ENCODE measurements at regions of chr11 and their contacts with region 1.

Region 1: GRCh38 chr11:96342961-96343711 is at the start of gene MAML2:
- DNase-seq: peak; percentile 84 to 96 (median 89)
- H3K4me3 ChIP-seq: peak within 1 kb of the TSS; percentile 60 to 78
- H3K4me3 Mint-ChIP-seq: peak within 1 kb of the TSS; percentile 91 to 98 (median 94)
- H3K27ac ChIP-seq: peak within 1 kb of the TSS; percentile 75
- H3K27ac Mint-ChIP-seq: peak within 1 kb of the TSS; percentile 86 to 97 (median 96)
- H3K4me1 ChIP-seq: peaks cover 34% of the 10 kb centered on the region
- H3K4me1 Mint-ChIP-seq: peaks cover 23 to 46% (median 30%) of the 10 kb centered on the region in 4 donors
- H3K27me3 ChIP-seq: no peaks in the 10 kb centered on the region
- H3K27me3 Mint-ChIP-seq: no peaks in the 10 kb centered on the region
- total RNA-seq, gene MAML2: 37.5 to 38.3 TPM

Region 2: GRCh38 chr11:95835768-95836488 is 507.2 kb before region 1 on chr11:
- CTCF ChIA-PET with region 1: interaction called, 47 read pairs
- POLR2A ChIA-PET with region 1: interaction called, 3 read pairs
- intact Hi-C with region 1: loop called (anchors 1 kb)
- DNase-seq: peak; percentile 55 to 64 (median 55)
- H3K4me3 ChIP-seq: no peak overlapping the region
- H3K4me3 Mint-ChIP-seq: no peak overlapping the region
- H3K27ac ChIP-seq: no peak overlapping the region
- H3K27ac Mint-ChIP-seq: peak overlapping the region in 4 of 7 donors; percentile 1 to 75 (median 51)
- H3K4me1 ChIP-seq: no peaks in the 10 kb centered on the region
- H3K4me1 Mint-ChIP-seq: peaks cover 0 to 3% (median 1%) of the 10 kb centered on the region in 4 donors
- H3K27me3 ChIP-seq: no peaks in the 10 kb centered on the region
- H3K27me3 Mint-ChIP-seq: no peaks in the 10 kb centered on the region

Region 3: GRCh38 chr11:96062134-96062533 is 281.0 kb before region 1 on chr11:
- CTCF ChIA-PET with region 1: interaction called, 258 read pairs
- POLR2A ChIA-PET with region 1: interaction called, 66 read pairs
- intact Hi-C with region 1: no loop called
- DNase-seq: peak; percentile 7 to 50 (median 23)
- H3K4me3 ChIP-seq: no peak overlapping the region
- H3K4me3 Mint-ChIP-seq: no peak overlapping the region
- H3K27ac ChIP-seq: no peak overlapping the region
- H3K27ac Mint-ChIP-seq: peak overlapping the region in 6 of 7 donors; percentile 25 to 75 (median 56)
- H3K4me1 ChIP-seq: peaks cover 22% of the 10 kb centered on the region
- H3K4me1 Mint-ChIP-seq: peaks cover 35 to 54% (median 41%) of the 10 kb centered on the region in 4 donors
- H3K27me3 ChIP-seq: no peaks in the 10 kb centered on the region
- H3K27me3 Mint-ChIP-seq: no peaks in the 10 kb centered on the region

Region 4: GRCh38 chr11:96134602-96135001 is 208.5 kb before region 1 on chr11:
- CTCF ChIA-PET with region 1: interaction called, 38 read pairs
- POLR2A ChIA-PET with region 1: interaction called, 6 read pairs
- intact Hi-C with region 1: no loop called
- DNase-seq: peak in 4 of 5 donors; percentile 30 to 56 (median 38)
- H3K4me3 ChIP-seq: no peak overlapping the region
- H3K4me3 Mint-ChIP-seq: peak overlapping the region in 5 of 8 donors; percentile 21 to 83 (median 47)
- H3K27ac ChIP-seq: no peak overlapping the region
- H3K27ac Mint-ChIP-seq: peak overlapping the region in 6 of 7 donors; percentile 50 to 82 (median 72)
- H3K4me1 ChIP-seq: peaks cover 55% of the 10 kb centered on the region
- H3K4me1 Mint-ChIP-seq: peaks cover 39 to 69% (median 55%) of the 10 kb centered on the region in 4 donors
- H3K27me3 ChIP-seq: no peaks in the 10 kb centered on the region
- H3K27me3 Mint-ChIP-seq: no peaks in the 10 kb centered on the region

Region 5: GRCh38 chr11:96222102-96222501 is 121.0 kb before region 1 on chr11:
- CTCF ChIA-PET with region 1: interaction called, 26 read pairs
- POLR2A ChIA-PET with region 1: interaction called, 27 read pairs
- intact Hi-C with region 1: no loop called
- DNase-seq: no peak
- H3K4me3 ChIP-seq: no peak overlapping the region
- H3K4me3 Mint-ChIP-seq: peak overlapping the region in 7 of 8 donors; percentile 6 to 77 (median 53)
- H3K27ac ChIP-seq: peak overlapping the region; percentile 2
- H3K27ac Mint-ChIP-seq: peak overlapping the region; percentile 57 to 89 (median 80)
- H3K4me1 ChIP-seq: peaks cover 76% of the 10 kb centered on the region
- H3K4me1 Mint-ChIP-seq: peaks cover 55 to 89% (median 73%) of the 10 kb centered on the region in 4 donors
- H3K27me3 ChIP-seq: no peaks in the 10 kb centered on the region
- H3K27me3 Mint-ChIP-seq: no peaks in the 10 kb centered on the region

Region 6: GRCh38 chr11:96279018-96279895 is 63.9 kb before region 1 on chr11:
- CTCF ChIA-PET with region 1: interaction called, 13 read pairs
- POLR2A ChIA-PET with region 1: interaction called, 5 read pairs
- intact Hi-C with region 1: no loop called
- DNase-seq: no peak
- H3K4me3 ChIP-seq: no peak overlapping the region
- H3K4me3 Mint-ChIP-seq: peak overlapping the region in 3 of 8 donors; percentile 17 to 29 (median 23)
- H3K27ac ChIP-seq: no peak overlapping the region
- H3K27ac Mint-ChIP-seq: peak overlapping the region; percentile 4 to 71 (median 41)
- H3K4me1 ChIP-seq: peaks cover 57% of the 10 kb centered on the region
- H3K4me1 Mint-ChIP-seq: peaks cover 38 to 65% (median 57%) of the 10 kb centered on the region in 4 donors
- H3K27me3 ChIP-seq: no peaks in the 10 kb centered on the region
- H3K27me3 Mint-ChIP-seq: no peaks in the 10 kb centered on the region

Region 7: DNA sequence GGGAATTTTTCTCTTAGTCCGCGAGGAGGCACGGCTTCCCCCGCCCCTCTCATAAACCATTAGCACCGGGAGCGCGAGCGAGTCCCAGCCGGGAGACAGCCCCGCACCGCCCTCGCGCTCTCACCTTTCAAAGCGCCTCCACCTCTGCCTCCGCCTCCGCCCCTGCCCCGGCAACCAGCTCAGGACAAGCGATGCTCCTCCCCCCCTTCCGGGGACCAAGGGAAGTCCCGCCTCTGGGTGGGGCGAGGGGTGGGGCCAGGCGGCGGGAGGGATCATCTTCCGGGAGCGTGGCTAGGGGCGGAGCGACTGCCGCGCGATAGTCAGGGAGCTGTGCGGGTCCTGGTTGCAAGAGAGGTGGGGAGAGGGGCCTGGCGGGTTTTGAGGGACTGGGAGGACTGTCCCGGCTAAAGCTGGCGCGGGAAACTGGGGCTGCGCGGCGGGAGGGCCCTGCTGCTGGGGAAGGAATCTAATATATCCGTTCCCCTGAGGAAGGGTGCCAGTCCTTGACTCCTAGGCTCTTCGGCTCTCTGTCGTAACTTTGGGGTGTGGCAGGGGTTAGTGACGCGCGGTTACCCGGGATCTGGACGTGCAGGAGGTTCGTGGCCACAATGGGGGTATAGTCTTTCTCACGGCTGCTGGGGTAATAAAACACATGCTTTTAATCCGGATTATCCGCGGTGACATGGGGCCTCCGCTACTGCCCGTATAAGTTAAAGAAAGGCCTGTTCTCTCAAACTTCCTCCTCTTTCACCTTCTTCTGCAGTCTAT is 46.8 kb after region 1 on chr11 and contains the starts of genes CCDC82 and JRKL:
- CTCF ChIA-PET with region 1: interaction called, 42 read pairs
- POLR2A ChIA-PET with region 1: interaction called, 38 read pairs
- intact Hi-C with region 1: loop called (anchors 1 kb)
- DNase-seq: peak; percentile 97 to 99 (median 98)
- H3K4me3 ChIP-seq: peak within 1 kb of the TSS; percentile 85 to 93
- H3K4me3 Mint-ChIP-seq: peak within 1 kb of the TSS; percentile 92 to 98 (median 94)
- H3K27ac ChIP-seq: peak within 1 kb of the TSS; percentile 79
- H3K27ac Mint-ChIP-seq: peak within 1 kb of the TSS; percentile 91 to 98 (median 97)
- H3K4me1 ChIP-seq: peaks cover 36% of the 10 kb centered on the region
- H3K4me1 Mint-ChIP-seq: peaks cover 22 to 59% (median 37%) of the 10 kb centered on the region in 4 donors
- H3K27me3 ChIP-seq: no peaks in the 10 kb centered on the region
- H3K27me3 Mint-ChIP-seq: no peaks in the 10 kb centered on the region
- total RNA-seq, gene CCDC82: 37.9 to 42.8 TPM
- total RNA-seq, gene JRKL: 18.3 to 20.0 TPM